Endothelial cell of umbilical vein (primary cell): ENCODE measurements at regions of chr9 and their contacts with region 1.

Region 1: DNA sequence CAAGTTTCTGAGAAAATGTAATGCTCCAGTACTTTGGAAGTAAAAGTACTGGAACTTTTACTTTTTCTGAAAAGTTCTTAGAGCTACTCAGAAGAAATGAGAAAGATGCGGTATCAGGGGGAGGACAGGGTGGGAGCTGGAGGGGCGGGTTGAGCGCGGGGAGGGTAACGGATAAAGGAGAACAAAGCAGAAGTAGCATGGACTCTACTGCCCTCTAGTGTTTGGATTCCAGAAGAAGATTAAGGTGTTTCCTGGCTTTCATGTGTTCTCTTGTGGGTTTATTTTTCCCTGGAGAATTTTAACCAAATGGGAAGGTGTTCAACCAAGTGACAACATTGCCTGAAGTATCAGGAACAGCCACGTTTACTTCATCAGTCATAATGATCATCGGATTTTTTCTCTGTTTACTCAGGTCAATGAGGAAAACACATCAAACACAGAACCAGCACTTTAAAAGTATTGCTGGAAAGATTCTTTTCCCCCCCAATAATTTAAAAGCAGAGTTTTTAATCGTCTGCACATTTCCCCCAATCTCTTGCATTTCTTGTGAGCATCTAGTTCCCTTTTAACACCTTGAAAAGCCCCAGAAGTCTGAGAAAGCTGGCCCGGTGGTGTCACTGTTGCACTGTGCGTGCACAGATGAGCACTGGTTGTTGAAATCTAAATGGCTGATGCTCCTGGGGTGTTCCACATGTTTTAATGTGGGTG is 190.6 kb downstream of the MPDZ start:
- DNase-seq: peak; percentile 61
- H3K4me3 ChIP-seq: peak overlapping the region in 1 of 3 experiments; percentile 35
- H3K27ac ChIP-seq: no peak overlapping the region
- H3K4me1 ChIP-seq: peaks cover 9% of the 10 kb centered on the region
- H3K27me3 ChIP-seq: no peaks in the 10 kb centered on the region
- CTCF ChIP-seq: peak; percentile 36 to 66
- POLR2A ChIP-seq: no peak

Region 2: DNA sequence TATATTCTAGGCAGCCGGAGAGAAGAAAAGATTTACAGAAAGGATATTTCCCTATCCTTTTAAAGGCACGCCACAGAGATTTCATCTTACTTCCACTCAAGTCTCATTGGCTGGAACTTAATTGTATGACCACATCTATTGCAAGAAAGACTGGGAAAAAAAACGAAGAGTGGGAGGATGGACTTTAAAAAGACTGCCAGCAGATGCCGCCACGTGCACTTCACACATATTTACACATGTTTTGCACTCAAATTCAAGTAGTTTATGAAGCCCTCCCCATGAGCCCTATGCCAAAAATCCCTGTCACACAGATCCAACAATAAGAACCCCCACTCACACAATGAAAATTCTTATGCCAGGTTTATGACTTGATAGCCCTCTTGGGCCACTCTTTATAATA is 534.2 kb before region 1 on chr9:
- CTCF ChIA-PET with region 1: no interaction called
- POLR2A ChIA-PET with region 1: no interaction called
- dilution Hi-C with region 1: no loop called
- intact Hi-C with region 1: no loop called
- DNase-seq: peak; percentile 32
- H3K4me3 ChIP-seq: no peak overlapping the region
- H3K27ac ChIP-seq: no peak overlapping the region
- H3K4me1 ChIP-seq: no peaks in the 10 kb centered on the region
- H3K27me3 ChIP-seq: peaks cover 0 to under 1% of the 10 kb centered on the region in 2 experiments
- CTCF ChIP-seq: peak in 1 of 2 donors; percentile 7
- POLR2A ChIP-seq: no peak

Region 3: GRCh38 chr9:12702160-12702758 is 386.6 kb before region 1 on chr9:
- CTCF ChIA-PET with region 1: interaction called, 28 read pairs
- POLR2A ChIA-PET with region 1: no interaction called
- dilution Hi-C with region 1: no loop called
- intact Hi-C with region 1: loop called (anchors 1 kb)
- DNase-seq: peak; percentile 70
- H3K4me3 ChIP-seq: no peak overlapping the region
- H3K27ac ChIP-seq: no peak overlapping the region
- H3K4me1 ChIP-seq: no peaks in the 10 kb centered on the region
- H3K27me3 ChIP-seq: no peaks in the 10 kb centered on the region
- CTCF ChIP-seq: peak; percentile 58 to 62
- POLR2A ChIP-seq: no peak

Region 4: GRCh38 chr9:12884737-12885414 is 204.0 kb before region 1 on chr9:
- CTCF ChIA-PET with region 1: no interaction called
- POLR2A ChIA-PET with region 1: no interaction called
- dilution Hi-C with region 1: no loop called
- intact Hi-C with region 1: loop called (anchors 5 kb)
- DNase-seq: peak; percentile 64
- H3K4me3 ChIP-seq: no peak overlapping the region
- H3K27ac ChIP-seq: no peak overlapping the region
- H3K4me1 ChIP-seq: no peaks in the 10 kb centered on the region
- H3K27me3 ChIP-seq: no peaks in the 10 kb centered on the region
- CTCF ChIP-seq: peak; percentile 22 to 32
- POLR2A ChIP-seq: no peak

Region 5: DNA sequence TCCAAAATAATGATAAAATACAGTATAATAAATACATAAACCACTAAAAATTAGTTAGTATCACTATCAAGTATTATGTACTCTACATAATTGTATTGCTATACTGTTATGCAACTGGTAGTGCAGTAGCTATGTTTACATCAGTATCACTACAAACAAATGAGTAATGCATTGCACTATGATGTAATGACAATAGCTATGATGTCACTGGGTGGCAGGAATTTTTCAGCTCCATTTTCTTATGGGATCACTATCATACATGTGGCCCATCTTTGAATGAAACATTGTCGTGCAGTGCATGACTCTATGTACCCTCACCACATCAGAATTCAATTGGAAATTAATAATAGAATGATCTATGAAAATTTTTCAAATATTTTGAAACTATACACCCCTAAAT is 10.7 kb before region 1 on chr9:
- CTCF ChIA-PET with region 1: interaction called, 22 read pairs
- POLR2A ChIA-PET with region 1: no interaction called
- dilution Hi-C with region 1: no loop called
- intact Hi-C with region 1: no loop called
- DNase-seq: no peak
- H3K4me3 ChIP-seq: no peak overlapping the region
- H3K27ac ChIP-seq: no peak overlapping the region
- H3K4me1 ChIP-seq: no peaks in the 10 kb centered on the region
- H3K27me3 ChIP-seq: no peaks in the 10 kb centered on the region
- CTCF ChIP-seq: no peak
- POLR2A ChIP-seq: no peak